ENCODE measurements at regions of chr10 and their contacts with region 1.

Region 1: DNA sequence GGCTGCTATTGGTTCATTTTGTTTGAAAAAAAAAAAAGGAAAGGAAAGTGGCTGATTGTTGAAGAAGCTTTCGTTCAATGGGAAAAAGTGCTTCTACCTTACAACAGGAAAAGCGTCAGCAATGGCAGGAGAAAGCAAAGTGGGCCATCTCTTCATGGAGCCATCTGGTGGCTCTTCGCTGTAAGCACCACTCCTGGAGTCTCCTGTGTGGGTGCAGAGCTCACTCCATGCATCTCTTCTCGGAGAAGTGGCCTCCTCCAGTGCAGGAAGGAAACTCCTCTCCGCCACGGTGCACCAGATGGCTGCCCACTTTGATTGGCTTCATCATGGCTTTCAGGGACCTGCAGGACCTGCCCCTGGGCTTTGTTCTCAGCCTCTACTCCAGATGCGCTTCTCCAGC is 250.9 kb downstream of the PTEN start:
- DNase-seq: peak; percentile 63

Region 2: GRCh38 chr10:87878664-87879459 is 235.5 kb before region 1 on chr10:
- in situ Hi-C with region 1: loop called (anchors 10 kb)
- DNase-seq: no peak

Region 3: DNA sequence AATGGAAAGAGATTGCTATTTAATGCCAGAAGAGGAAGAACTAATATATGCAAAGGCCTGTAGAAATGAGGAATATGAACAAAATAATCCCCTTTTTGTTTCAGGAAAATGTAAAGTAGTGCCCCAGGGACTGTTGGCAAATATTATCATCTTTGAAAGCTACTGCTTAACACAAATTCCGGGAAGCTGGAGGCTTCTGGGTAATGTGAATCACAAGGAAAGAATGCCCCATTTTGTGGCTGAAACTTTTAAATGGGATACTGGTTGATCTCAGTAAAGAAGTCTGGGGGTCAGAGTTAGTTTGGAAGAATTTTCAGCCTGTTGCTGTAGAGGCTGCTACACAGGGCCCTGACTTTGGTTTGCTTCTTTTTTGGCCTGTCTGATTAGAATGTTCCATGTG is 109.9 kb before region 1 on chr10:
- in situ Hi-C with region 1: no loop called
- DNase-seq: no peak